GM10248 (cell line): ENCODE measurements at regions of chr17 and their contacts with region 1.

Region 1: DNA sequence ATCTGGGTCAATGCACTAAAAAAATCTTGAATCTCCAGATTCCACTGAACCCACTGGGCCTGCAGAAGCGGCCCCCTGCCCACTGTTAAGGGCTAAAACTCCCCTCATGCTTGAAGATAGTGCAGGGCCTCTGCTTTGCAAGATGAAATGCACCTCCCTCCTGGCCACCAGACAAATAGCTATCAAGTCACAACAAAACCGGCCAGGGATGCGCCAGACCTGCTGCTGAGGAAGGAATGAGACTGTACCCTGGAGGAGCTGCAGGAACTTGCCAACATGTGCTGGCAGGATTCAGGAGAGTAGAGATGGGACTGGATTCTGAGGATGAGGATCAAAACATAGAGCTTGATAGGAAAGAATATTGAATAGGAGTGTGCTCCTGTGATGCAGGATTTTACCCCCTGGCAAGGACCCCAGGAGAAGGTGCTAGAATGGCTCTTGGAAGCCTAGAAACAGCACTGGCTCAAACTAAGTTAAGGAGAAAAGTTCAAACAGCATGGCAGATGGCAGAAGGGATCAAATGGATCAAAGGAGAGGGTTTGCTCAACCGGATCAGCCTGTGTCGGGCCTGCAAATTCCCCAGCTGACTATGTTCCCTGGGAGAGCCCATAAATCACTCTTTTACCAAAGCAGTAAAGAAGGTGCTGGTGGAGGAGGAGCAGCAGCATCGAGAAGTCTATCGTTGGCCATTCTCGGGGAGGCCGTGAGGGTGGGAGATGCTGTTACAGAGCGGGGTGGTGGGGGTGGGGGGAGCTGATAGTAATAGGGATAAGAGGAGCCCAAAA is 27.2 kb upstream of the XYLT2 start:
- DNase-seq: no peak
- CTCF ChIP-seq: no peak

Region 2: GRCh38 chr17:50001140-50001714 is 317.5 kb before region 1 on chr17:
- CTCF ChIA-PET with region 1: no interaction called
- POLR2A ChIA-PET with region 1: no interaction called
- DNase-seq: no peak
- CTCF ChIP-seq: no peak

Region 3: DNA sequence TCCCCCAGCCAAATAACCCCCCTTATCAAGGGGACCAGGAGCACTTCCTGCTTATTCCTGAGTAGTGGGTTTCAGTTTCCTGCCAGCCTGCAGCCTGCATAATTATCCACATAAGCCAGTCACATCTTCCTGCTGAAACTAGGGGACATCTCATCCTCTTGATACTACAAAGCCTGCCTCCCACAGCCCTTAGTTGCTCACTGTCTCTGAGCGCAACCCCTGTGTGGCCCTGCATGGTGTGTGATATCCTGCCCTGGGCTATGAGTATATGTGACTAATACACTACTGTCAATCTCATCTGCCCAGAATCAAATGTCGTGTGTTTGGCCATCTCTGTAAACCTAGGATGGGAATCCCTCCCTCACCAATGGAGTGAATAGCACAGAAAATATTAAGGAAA is 19.3 kb after region 1 on chr17:
- CTCF ChIA-PET with region 1: interaction called, 14 read pairs
- POLR2A ChIA-PET with region 1: no interaction called
- DNase-seq: no peak
- CTCF ChIP-seq: no peak